ENCODE measurements at regions of chr20 and their contacts with region 1.

Region 1: DNA sequence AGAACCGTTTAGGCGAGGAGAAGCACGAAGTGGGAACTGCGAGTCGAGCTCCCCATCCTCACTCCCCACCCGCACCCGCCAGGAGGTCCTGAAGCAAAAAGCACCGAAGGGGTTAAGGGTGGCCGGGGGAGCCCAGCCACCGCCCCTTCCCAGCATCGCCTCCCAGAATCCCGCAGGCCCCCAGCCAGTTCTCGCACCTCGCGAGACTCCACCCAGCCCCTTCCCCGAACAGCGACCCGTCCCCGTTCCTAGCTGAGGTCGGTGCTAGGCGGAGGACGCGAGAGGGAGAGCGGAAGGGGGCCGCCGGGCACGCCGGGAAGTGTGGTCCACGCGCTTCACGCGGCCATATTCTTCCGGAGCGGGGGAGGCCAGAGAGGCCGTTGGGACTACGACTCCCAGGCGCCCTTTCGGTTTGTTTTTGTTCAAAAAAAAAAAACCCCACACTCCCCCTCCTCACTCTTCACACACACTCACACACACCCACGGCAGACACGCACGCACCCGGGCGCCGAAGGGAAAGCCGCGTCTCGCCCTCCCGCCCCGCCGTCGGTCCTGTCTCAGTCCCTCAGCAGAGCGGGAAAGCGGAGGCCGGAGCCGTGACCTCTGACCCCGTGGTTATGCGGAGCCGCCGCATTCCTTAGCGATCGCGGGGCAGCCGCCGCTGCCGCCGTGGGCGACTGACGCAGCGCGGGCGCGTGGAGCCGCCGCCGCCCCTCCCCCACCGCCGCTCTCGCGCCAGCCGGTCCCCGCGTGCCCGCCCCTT is at the start of gene ASXL1:
- DNase-seq: peak; percentile 97
- H3K4me3 Mint-ChIP-seq: peak within 1 kb of the TSS; percentile 97
- H3K27ac Mint-ChIP-seq: peak within 1 kb of the TSS; percentile 100
- H3K4me1 Mint-ChIP-seq: peaks cover 67% of the 10 kb centered on the region
- H3K27me3 Mint-ChIP-seq: no peaks in the 10 kb centered on the region
- total RNA-seq, gene ASXL1: 155 to 162 TPM

Region 2: DNA sequence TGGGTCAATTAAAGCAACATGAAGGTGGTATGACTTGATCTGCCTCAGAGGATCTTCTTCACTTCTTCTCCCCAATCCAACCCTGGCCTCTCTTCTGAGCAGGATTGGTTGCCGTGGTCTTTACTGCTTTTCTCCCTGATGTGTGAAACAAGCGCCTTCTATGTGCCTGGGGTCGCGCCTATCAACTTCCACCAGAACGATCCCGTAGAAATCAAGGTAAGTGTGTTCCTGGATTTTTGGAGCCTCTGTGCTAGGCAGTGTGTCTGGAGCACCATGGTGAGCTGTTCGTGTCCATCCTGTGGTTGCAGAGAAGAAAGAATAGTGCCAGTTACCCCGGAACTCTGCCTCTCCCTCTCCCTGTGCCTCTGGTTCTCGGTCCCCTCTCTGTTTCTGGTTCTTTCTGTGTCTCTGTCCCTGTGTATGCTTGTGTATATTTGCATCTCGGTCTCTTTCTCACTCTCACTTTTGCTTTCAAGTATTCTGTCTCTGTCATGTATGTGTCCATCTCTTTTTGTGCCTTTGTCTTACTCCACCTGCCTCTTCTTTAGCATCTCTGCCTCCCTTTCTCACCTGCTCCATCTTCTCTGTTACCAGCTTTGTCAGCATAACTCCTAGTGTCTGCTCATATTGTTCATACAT is 225.0 kb before region 1 on chr20:
- CTCF ChIA-PET with region 1: no interaction called
- intact Hi-C with region 1: no loop called
- DNase-seq: no peak
- H3K4me3 Mint-ChIP-seq: no peak overlapping the region
- H3K27ac Mint-ChIP-seq: no peak overlapping the region
- H3K4me1 Mint-ChIP-seq: peaks cover 21% of the 10 kb centered on the region
- H3K27me3 Mint-ChIP-seq: no peaks in the 10 kb centered on the region

Region 3: GRCh38 chr20:32207626-32208498 is 150.2 kb before region 1 on chr20 and contains the starts of genes PLAGL2 and POFUT1:
- CTCF ChIA-PET with region 1: interaction called, 3 read pairs
- intact Hi-C with region 1: loop called (anchors 1 kb)
- DNase-seq: peak; percentile 92
- H3K4me3 Mint-ChIP-seq: peak within 1 kb of the TSS; percentile 99
- H3K27ac Mint-ChIP-seq: peak within 1 kb of the TSS; percentile 98
- H3K4me1 Mint-ChIP-seq: peaks cover 65% of the 10 kb centered on the region
- H3K27me3 Mint-ChIP-seq: no peaks in the 10 kb centered on the region
- total RNA-seq, gene PLAGL2: 63.3 to 64.9 TPM
- total RNA-seq, gene POFUT1: 37.1 to 38.9 TPM

Region 4: DNA sequence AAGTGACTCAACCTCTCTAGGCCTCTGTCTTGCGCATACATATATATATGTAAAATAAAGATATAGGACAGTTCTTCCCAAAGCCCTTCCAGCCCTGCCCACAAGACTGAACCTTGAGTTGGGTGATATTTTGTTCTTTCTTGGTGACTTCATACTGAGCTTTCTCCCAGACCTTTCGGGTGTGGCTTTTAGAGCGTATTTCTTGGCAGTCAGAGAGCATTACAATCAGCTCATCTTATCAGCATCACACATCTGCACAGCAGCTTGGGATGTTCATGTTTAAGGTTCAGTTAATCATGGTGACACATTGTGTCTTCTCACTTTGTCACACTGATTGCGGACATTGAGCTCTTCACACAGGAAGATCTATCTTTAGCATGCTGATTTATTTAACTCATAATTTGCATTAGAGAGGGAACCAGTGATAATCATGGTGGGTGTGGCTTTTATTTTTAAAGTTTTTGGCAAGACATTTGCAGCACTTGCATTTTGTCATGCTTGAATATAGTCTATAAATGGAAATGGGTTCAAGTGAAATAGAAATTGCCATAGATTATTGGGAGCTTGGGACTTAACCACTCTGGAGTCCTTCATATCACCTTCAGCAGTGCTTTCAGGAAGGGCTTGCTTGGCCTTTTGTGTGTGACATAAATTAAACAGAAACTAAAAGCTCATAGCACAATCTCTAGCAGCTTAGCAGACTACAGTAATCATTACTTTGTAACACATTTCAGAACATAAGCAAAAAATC is 72.3 kb before region 1 on chr20:
- CTCF ChIA-PET with region 1: interaction called, 6 read pairs
- intact Hi-C with region 1: loop called (anchors 1 kb)
- DNase-seq: peak; percentile 78
- H3K4me3 Mint-ChIP-seq: peak overlapping the region; percentile 60
- H3K27ac Mint-ChIP-seq: peak overlapping the region; percentile 92
- H3K4me1 Mint-ChIP-seq: peaks cover 88% of the 10 kb centered on the region
- H3K27me3 Mint-ChIP-seq: no peaks in the 10 kb centered on the region

Region 5: GRCh38 chr20:32484958-32485769 is 127.1 kb after region 1 on chr20:
- CTCF ChIA-PET with region 1: no interaction called
- intact Hi-C with region 1: loop called (anchors 1 kb)
- DNase-seq: peak; percentile 95
- H3K4me3 Mint-ChIP-seq: peak overlapping the region; percentile 84
- H3K27ac Mint-ChIP-seq: peak overlapping the region; percentile 93
- H3K4me1 Mint-ChIP-seq: peaks cover 39% of the 10 kb centered on the region
- H3K27me3 Mint-ChIP-seq: no peaks in the 10 kb centered on the region

Region 6: GRCh38 chr20:32585011-32585518 is 227.0 kb after region 1 on chr20 and contains the start of gene NOL4L:
- CTCF ChIA-PET with region 1: no interaction called
- intact Hi-C with region 1: loop called (anchors 5 kb)
- DNase-seq: peak; percentile 57
- H3K4me3 Mint-ChIP-seq: peak within 1 kb of the TSS; percentile 74
- H3K27ac Mint-ChIP-seq: peak within 1 kb of the TSS; percentile 60
- H3K4me1 Mint-ChIP-seq: peaks cover 33% of the 10 kb centered on the region
- H3K27me3 Mint-ChIP-seq: no peaks in the 10 kb centered on the region
- total RNA-seq, gene NOL4L: 24.8 to 29.2 TPM

Measured in activated naive CD4-positive, alpha-beta T cell treated with anti-CD3 and anti-CD28 coated beads for 36 hours (primary cell).